B cell (primary cell): ENCODE measurements at regions of chr3 and their contacts with region 1.

Region 1: GRCh38 chr3:138915503-138916498 is 31.1 kb downstream of the FOXL2 start:
- DNase-seq: peak; percentile 88
- ATAC-seq: peak; percentile 84
- H3K4me3 ChIP-seq: peak overlapping the region; percentile 55 to 81 (median 70)
- H3K4me3 Mint-ChIP-seq: peak overlapping the region; percentile 92
- H3K27ac ChIP-seq: peak overlapping the region; percentile 40 to 54
- H3K27ac Mint-ChIP-seq: peak overlapping the region; percentile 83
- H3K4me1 ChIP-seq: peaks cover 3 to 18% of the 10 kb centered on the region in 2 donors
- H3K4me1 Mint-ChIP-seq: peaks cover 13% of the 10 kb centered on the region
- H3K27me3 ChIP-seq: peaks cover 0 to 5% (median 1%) of the 10 kb centered on the region in 4 experiments
- H3K27me3 Mint-ChIP-seq: peaks cover 10% of the 10 kb centered on the region
- CTCF ChIP-seq: peak; percentile 89

Region 2: GRCh38 chr3:138068579-138069174 is 847.1 kb before region 1 on chr3:
- CTCF ChIA-PET with region 1: interaction called, 4 read pairs
- POLR2A ChIA-PET with region 1: no interaction called
- intact Hi-C with region 1: loop called (anchors 2 kb)
- DNase-seq: peak; percentile 70
- ATAC-seq: peak; percentile 73
- H3K4me3 ChIP-seq: no peak overlapping the region
- H3K4me3 Mint-ChIP-seq: no peak overlapping the region
- H3K27ac ChIP-seq: no peak overlapping the region
- H3K27ac Mint-ChIP-seq: no peak overlapping the region
- H3K4me1 ChIP-seq: no peaks in the 10 kb centered on the region
- H3K4me1 Mint-ChIP-seq: no peaks in the 10 kb centered on the region
- H3K27me3 ChIP-seq: no peaks in the 10 kb centered on the region
- H3K27me3 Mint-ChIP-seq: peaks cover 23% of the 10 kb centered on the region
- CTCF ChIP-seq: peak; percentile 90

Region 3: DNA sequence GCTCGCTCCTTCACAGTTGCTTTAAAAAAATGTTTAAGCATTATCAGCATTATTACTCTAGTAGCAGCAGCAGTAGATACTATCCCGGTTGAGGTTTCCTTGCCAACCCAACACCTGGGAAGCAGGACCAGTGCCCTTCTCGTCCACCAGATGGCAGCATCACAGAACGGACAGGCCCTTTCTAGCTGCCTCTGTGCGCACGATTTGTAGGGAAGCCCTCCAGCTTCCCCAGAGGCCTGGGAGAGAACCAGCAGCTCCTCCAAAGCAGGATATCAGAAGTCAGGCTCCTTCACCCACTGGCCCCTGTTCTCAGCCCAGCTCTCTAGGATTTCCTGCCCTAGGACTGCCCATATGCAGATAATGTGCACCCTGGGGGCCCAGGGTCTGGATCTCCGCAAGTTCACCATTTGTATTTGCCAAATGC is 498.2 kb before region 1 on chr3:
- CTCF ChIA-PET with region 1: interaction called, 84 read pairs
- POLR2A ChIA-PET with region 1: no interaction called
- intact Hi-C with region 1: no loop called
- DNase-seq: peak; percentile 62
- ATAC-seq: peak; percentile 51
- H3K4me3 ChIP-seq: no peak overlapping the region
- H3K4me3 Mint-ChIP-seq: no peak overlapping the region
- H3K27ac ChIP-seq: no peak overlapping the region
- H3K27ac Mint-ChIP-seq: no peak overlapping the region
- H3K4me1 ChIP-seq: no peaks in the 10 kb centered on the region
- H3K4me1 Mint-ChIP-seq: no peaks in the 10 kb centered on the region
- H3K27me3 ChIP-seq: peaks cover 0 to 25% (median 7%) of the 10 kb centered on the region in 4 experiments
- H3K27me3 Mint-ChIP-seq: peaks cover 64% of the 10 kb centered on the region
- CTCF ChIP-seq: peak; percentile 79

Region 4: GRCh38 chr3:138578141-138578540 is 337.7 kb before region 1 on chr3:
- CTCF ChIA-PET with region 1: interaction called, 20 read pairs
- POLR2A ChIA-PET with region 1: no interaction called
- intact Hi-C with region 1: no loop called
- DNase-seq: peak; percentile 74
- ATAC-seq: peak; percentile 91
- H3K4me3 ChIP-seq: no peak overlapping the region
- H3K4me3 Mint-ChIP-seq: no peak overlapping the region
- H3K27ac ChIP-seq: no peak overlapping the region
- H3K27ac Mint-ChIP-seq: no peak overlapping the region
- H3K4me1 ChIP-seq: peaks cover 16 to 22% of the 10 kb centered on the region in 2 donors
- H3K4me1 Mint-ChIP-seq: peaks cover 21% of the 10 kb centered on the region
- H3K27me3 ChIP-seq: peaks cover 0 to 5% (median 0%) of the 10 kb centered on the region in 4 experiments
- H3K27me3 Mint-ChIP-seq: peaks cover 10% of the 10 kb centered on the region
- CTCF ChIP-seq: no peak

Region 5: GRCh38 chr3:138686771-138687221 is 229.0 kb before region 1 on chr3:
- CTCF ChIA-PET with region 1: interaction called, 56 read pairs
- POLR2A ChIA-PET with region 1: no interaction called
- intact Hi-C with region 1: loop called (anchors 1 kb)
- DNase-seq: peak; percentile 17
- ATAC-seq: peak; percentile 28
- H3K4me3 ChIP-seq: no peak overlapping the region
- H3K4me3 Mint-ChIP-seq: peak overlapping the region; percentile 50
- H3K27ac ChIP-seq: no peak overlapping the region
- H3K27ac Mint-ChIP-seq: no peak overlapping the region
- H3K4me1 ChIP-seq: peaks cover 19 to 23% of the 10 kb centered on the region in 2 donors
- H3K4me1 Mint-ChIP-seq: peaks cover 23% of the 10 kb centered on the region
- H3K27me3 ChIP-seq: no peaks in the 10 kb centered on the region
- H3K27me3 Mint-ChIP-seq: no peaks in the 10 kb centered on the region
- CTCF ChIP-seq: no peak

Region 6: DNA sequence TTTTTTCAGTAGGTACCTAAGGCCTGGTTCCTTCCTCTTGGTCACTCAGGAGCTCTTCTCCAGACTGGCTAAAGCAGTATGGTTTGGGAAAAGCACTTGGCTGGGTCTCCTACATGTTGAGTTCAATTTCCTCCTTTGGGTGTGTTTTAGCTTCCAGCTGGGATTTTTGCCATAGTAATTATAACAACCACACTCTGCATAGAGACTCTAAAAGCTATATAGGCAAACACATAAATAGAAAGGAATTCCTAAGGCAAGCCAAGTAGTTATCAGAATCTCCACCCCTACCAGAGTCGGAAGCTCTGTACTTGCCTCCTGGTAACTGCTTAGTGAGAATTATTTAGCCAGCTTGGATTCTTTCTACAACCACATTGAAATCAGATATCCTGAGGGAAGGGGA is 17.5 kb before region 1 on chr3:
- CTCF ChIA-PET with region 1: interaction called, 25 read pairs
- POLR2A ChIA-PET with region 1: no interaction called
- intact Hi-C with region 1: no loop called
- DNase-seq: no peak
- ATAC-seq: no peak
- H3K4me3 ChIP-seq: no peak overlapping the region
- H3K4me3 Mint-ChIP-seq: no peak overlapping the region
- H3K27ac ChIP-seq: no peak overlapping the region
- H3K27ac Mint-ChIP-seq: no peak overlapping the region
- H3K4me1 ChIP-seq: no peaks in the 10 kb centered on the region
- H3K4me1 Mint-ChIP-seq: no peaks in the 10 kb centered on the region
- H3K27me3 ChIP-seq: no peaks in the 10 kb centered on the region
- H3K27me3 Mint-ChIP-seq: peaks cover 4% of the 10 kb centered on the region
- CTCF ChIP-seq: no peak